ENCODE measurements at regions of chrX and their contacts with region 1.

Region 1: DNA sequence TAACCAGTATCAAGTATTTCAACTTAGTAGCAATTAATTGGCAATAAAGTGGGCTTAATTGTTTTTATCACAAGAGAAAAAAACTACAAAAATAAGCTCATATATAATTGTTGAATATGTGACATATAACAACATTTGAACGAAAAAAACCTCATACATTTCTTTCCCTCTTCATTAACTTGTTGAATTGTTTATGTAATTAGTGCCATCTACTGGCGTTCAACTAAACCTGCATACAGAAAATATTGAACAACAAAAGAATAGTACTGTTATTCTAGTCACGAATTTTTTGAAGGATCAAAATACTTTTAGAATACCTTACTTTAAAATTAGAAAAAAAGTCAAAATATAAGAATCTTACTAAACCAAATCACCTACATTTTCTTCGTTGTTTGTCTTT is 586.5 kb upstream of the FTHL17 start:
- DNase-seq: no peak
- CTCF ChIP-seq: peak; percentile 14

Region 2: GRCh38 chrX:30735839-30736238 is 922.5 kb before region 1 on chrX:
- in situ Hi-C with region 1: loop called (anchors 25 kb)
- DNase-seq: peak; percentile 62
- CTCF ChIP-seq: peak; percentile 54

Region 3: GRCh38 chrX:30971774-30972603 is 686.4 kb before region 1 on chrX:
- in situ Hi-C with region 1: loop called (anchors 25 kb)
- DNase-seq: peak; percentile 54
- CTCF ChIP-seq: peak; percentile 70

Region 4: DNA sequence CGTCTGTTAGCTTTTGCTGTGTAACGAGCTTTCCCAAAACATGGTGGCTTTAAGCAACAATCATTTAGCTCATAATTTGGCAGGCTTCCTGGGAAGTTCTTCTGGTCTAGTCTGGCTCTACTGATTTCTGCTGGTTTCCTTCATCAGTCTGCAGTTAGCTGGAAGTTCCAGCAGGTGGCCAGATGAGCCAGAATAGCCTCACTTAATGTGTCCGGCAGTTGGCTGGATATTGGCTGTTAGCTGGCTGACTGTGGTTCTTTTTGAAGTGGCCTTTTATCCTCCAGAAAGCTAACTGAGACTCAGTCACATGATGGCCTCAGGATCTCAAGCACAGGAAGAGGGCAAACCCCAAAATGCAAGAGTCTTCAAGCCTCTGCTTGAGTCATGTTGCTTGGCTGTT is 621.5 kb before region 1 on chrX:
- in situ Hi-C with region 1: loop called (anchors 5 kb)
- DNase-seq: peak; percentile 32
- CTCF ChIP-seq: peak; percentile 58

Region 5: GRCh38 chrX:31213941-31214340 is 444.4 kb before region 1 on chrX:
- in situ Hi-C with region 1: loop called (anchors 25 kb)
- DNase-seq: peak; percentile 32
- CTCF ChIP-seq: peak; percentile 55